B cell (primary cell): ENCODE measurements at regions of chr10 and their contacts with region 1.

Region 1: DNA sequence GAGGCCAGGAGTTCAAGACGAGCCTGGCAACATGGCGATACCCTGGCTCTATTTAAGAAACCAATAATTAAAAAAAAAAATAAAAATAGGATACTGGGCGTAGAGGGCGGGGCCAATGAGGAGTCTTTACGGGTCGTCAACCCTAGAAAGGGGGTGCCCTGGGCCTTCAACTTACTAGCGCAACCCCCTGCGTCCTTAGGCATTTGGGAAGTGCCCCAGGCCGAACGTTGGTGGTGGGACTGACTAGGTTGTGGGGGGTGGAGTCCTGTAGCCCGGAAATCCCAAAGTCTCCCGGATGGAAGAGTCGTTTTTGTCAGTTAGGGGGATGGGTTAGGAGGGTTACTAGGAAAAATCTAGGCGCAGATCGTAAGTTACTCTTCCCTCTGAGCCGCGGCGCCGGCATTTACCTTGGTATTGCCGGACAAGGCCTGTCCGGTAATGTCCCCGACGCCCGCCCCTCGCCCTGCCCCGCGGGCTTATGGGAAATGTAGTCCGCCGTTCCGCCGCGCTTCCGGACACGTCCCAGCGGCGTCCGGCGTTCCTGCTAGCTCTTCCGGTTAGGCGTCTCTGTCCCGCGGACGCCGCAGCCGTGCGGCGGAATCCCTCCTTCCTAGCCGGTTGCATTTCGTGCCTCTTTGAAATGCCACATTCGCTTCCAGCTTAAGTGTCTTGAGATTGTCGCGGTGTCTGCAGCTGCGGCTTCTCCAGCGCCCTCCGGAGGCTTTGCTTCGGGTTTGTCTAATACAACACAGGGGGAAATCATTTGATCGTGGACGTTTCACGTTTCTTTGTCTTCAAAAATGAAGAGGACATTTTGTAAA is 1.3 kb upstream of the ACBD5 start:
- DNase-seq: peak; percentile 96
- ATAC-seq: peak; percentile 65
- H3K4me3 ChIP-seq: peak overlapping the region; percentile 78 to 97 (median 91)
- H3K4me3 Mint-ChIP-seq: peak overlapping the region; percentile 95
- H3K27ac ChIP-seq: peak overlapping the region; percentile 93 to 97
- H3K27ac Mint-ChIP-seq: peak overlapping the region; percentile 100
- H3K4me1 ChIP-seq: peaks cover 17 to 27% of the 10 kb centered on the region in 2 donors
- H3K4me1 Mint-ChIP-seq: peaks cover 42% of the 10 kb centered on the region
- H3K27me3 ChIP-seq: no peaks in the 10 kb centered on the region
- H3K27me3 Mint-ChIP-seq: no peaks in the 10 kb centered on the region
- CTCF ChIP-seq: no peak

Region 2: DNA sequence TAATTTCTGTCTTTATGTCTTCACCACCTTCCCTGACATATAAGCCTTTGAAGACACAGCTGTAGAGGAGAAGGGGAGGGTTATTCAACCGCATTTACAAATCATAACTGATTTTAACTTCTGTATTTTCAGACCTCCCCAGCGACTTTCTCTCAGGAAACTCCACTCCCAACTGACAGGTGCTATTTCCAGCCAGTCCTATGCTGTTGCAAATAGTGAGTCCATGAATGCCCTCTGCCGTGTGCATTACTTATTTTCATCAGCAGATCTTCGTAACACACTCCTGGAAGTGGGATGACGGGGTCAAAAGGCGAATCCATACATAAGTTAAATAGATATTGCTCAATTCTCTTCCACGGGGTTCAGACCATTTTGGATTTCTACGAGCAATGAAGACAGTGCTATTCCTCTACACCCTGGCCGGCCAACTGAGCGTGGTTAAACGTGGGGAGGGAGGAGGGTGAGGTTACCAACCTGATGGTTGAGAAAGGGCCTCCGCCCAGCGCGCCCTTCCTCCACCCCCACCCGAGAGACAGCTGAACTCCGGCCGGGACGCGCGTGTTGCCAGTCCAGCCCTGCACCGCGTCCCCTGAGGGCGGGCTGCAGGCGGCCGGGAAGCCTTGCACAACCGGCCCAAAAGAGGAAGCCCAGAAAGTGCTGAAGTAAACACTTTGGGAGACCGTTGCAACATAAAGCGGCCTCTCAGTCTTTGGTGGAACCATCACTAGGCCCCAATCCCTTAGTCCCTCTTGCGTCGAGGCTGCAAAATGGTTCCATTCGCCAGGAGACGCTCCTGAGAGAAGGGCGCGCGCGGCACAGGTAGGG is 804.0 kb before region 1 on chr10 and contains the start of gene APBB1IP:
- CTCF ChIA-PET with region 1: no interaction called
- POLR2A ChIA-PET with region 1: no interaction called
- intact Hi-C with region 1: loop called (anchors 5 kb)
- DNase-seq: peak; percentile 81
- ATAC-seq: peak; percentile 82
- H3K4me3 ChIP-seq: peak within 1 kb of the TSS; percentile 73 to 89 (median 86)
- H3K4me3 Mint-ChIP-seq: peak within 1 kb of the TSS; percentile 95
- H3K27ac ChIP-seq: peak within 1 kb of the TSS; percentile 82 to 83
- H3K27ac Mint-ChIP-seq: peak within 1 kb of the TSS; percentile 99
- H3K4me1 ChIP-seq: peaks cover 31 to 44% of the 10 kb centered on the region in 2 donors
- H3K4me1 Mint-ChIP-seq: peaks cover 49% of the 10 kb centered on the region
- H3K27me3 ChIP-seq: no peaks in the 10 kb centered on the region
- H3K27me3 Mint-ChIP-seq: no peaks in the 10 kb centered on the region
- CTCF ChIP-seq: no peak
- total RNA-seq, gene APBB1IP: 97.0 and 99.8 TPM in 2 replicates

Region 3: GRCh38 chr10:26737730-26738129 is 504.1 kb before region 1 on chr10:
- CTCF ChIA-PET with region 1: no interaction called
- POLR2A ChIA-PET with region 1: no interaction called
- intact Hi-C with region 1: loop called (anchors 5 kb)
- DNase-seq: peak; percentile 86
- ATAC-seq: peak; percentile 69
- H3K4me3 ChIP-seq: no peak overlapping the region
- H3K4me3 Mint-ChIP-seq: peak overlapping the region; percentile 52
- H3K27ac ChIP-seq: peak overlapping the region; percentile 87
- H3K27ac Mint-ChIP-seq: peak overlapping the region; percentile 89
- H3K4me1 ChIP-seq: peaks cover 36 to 49% of the 10 kb centered on the region in 2 donors
- H3K4me1 Mint-ChIP-seq: peaks cover 50% of the 10 kb centered on the region
- H3K27me3 ChIP-seq: no peaks in the 10 kb centered on the region
- H3K27me3 Mint-ChIP-seq: no peaks in the 10 kb centered on the region
- CTCF ChIP-seq: no peak

Region 4: DNA sequence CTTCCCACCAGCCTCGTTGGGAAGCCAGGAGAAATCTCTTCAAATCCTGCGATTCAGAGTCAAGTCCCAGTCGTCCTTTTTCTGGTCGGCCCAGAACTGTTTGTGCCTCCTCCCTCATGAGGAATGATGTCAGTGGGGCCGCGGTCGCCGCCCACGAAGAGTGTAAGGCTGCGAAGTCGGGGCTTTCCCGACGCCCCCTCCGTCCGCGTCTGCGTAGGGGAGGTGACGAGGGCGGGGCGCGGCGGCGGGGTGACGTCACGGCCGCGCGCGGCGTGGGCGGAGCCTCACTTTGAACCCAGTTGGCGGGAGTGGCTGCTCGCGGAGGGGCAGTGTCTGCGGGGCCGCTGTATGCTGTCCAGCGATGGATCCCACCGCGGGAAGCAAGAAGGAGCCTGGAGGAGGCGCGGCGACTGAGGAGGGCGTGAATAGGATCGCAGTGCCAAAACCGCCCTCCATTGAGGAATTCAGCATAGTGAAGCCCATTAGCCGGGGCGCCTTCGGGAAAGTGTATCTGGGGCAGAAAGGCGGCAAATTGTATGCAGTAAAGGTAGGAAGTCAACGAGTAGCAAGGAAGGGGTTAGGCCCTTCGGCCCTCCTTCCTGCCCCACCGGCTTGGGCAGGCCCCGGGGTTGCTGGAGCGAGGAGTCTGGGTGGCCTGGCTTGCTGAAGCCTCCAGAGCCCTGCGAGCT is 86.7 kb before region 1 on chr10 and contains the start of gene MASTL:
- CTCF ChIA-PET with region 1: interaction called, 10 read pairs
- POLR2A ChIA-PET with region 1: interaction called, 30 read pairs
- intact Hi-C with region 1: loop called (anchors 1 kb)
- DNase-seq: peak; percentile 98
- ATAC-seq: peak; percentile 86
- H3K4me3 ChIP-seq: peak within 1 kb of the TSS; percentile 73 to 99 (median 95)
- H3K4me3 Mint-ChIP-seq: peak within 1 kb of the TSS; percentile 96
- H3K27ac ChIP-seq: peak within 1 kb of the TSS; percentile 97
- H3K27ac Mint-ChIP-seq: peak within 1 kb of the TSS; percentile 100
- H3K4me1 ChIP-seq: peaks cover 20 to 29% of the 10 kb centered on the region in 2 donors
- H3K4me1 Mint-ChIP-seq: peaks cover 48% of the 10 kb centered on the region
- H3K27me3 ChIP-seq: no peaks in the 10 kb centered on the region
- H3K27me3 Mint-ChIP-seq: no peaks in the 10 kb centered on the region
- CTCF ChIP-seq: no peak
- total RNA-seq, gene MASTL: 12.4 and 13.6 TPM in 2 replicates

Region 5: DNA sequence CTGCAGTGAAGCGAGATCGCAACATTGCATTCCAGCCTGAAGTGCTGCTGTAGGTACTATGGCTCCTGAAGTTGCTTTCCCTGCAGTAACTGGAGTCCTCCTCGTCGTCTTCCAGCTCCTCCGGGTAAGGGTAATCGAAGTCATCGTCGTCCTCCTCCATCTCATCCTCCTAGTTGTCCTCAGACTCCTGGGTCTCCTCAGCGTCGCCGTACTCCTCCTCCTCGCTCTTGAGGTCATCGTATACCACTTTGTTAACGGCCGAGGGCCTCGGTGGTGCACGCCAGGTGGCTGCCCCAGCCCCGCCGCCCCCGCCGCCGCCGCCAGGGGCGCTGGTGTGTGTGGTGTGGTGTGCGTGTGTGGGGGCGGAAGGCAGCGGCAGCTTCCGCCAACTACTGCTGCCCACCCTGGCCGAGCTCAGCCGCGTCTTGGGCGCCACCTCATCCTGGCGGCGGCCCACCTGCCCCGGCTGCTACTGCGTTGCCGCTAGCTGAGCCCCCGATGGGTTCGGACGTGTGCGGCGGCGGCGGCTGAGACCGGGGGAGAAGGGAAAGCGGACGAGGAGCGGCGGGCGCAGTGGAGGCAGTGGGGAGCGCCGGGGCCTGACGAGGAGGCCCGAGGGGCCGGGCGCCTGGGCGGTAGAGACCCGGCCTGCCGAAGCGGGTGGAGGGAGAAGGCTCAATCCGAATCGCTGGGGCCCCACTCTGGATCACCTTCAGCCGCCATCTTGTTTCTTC is 10.6 kb after region 1 on chr10:
- CTCF ChIA-PET with region 1: interaction called, 14 read pairs
- POLR2A ChIA-PET with region 1: interaction called, 27 read pairs
- intact Hi-C with region 1: loop called (anchors 1 kb)
- DNase-seq: peak; percentile 82
- ATAC-seq: peak; percentile 99
- H3K4me3 ChIP-seq: peak overlapping the region in 4 of 5 experiments; percentile 64 to 79 (median 71)
- H3K4me3 Mint-ChIP-seq: peak overlapping the region; percentile 85
- H3K27ac ChIP-seq: peak overlapping the region; percentile 78 to 91
- H3K27ac Mint-ChIP-seq: peak overlapping the region; percentile 92
- H3K4me1 ChIP-seq: peaks cover 1 to 9% of the 10 kb centered on the region in 2 donors
- H3K4me1 Mint-ChIP-seq: peaks cover 7% of the 10 kb centered on the region
- H3K27me3 ChIP-seq: peaks cover 0 to 6% (median 2%) of the 10 kb centered on the region in 4 experiments
- H3K27me3 Mint-ChIP-seq: peaks cover 6% of the 10 kb centered on the region
- CTCF ChIP-seq: peak; percentile 90

Region 6: GRCh38 chr10:27276581-27276980 is 34.7 kb after region 1 on chr10:
- CTCF ChIA-PET with region 1: no interaction called
- POLR2A ChIA-PET with region 1: no interaction called
- intact Hi-C with region 1: no loop called
- DNase-seq: no peak
- ATAC-seq: no peak
- H3K4me3 ChIP-seq: no peak overlapping the region
- H3K4me3 Mint-ChIP-seq: no peak overlapping the region
- H3K27ac ChIP-seq: no peak overlapping the region
- H3K27ac Mint-ChIP-seq: no peak overlapping the region
- H3K4me1 ChIP-seq: no peaks in the 10 kb centered on the region
- H3K4me1 Mint-ChIP-seq: no peaks in the 10 kb centered on the region
- H3K27me3 ChIP-seq: peaks cover 0 to 13% (median 3%) of the 10 kb centered on the region in 4 experiments
- H3K27me3 Mint-ChIP-seq: peaks cover 45% of the 10 kb centered on the region
- CTCF ChIP-seq: no peak

Region 7: GRCh38 chr10:27360581-27361172 is 118.8 kb after region 1 on chr10:
- CTCF ChIA-PET with region 1: interaction called, 5 read pairs
- POLR2A ChIA-PET with region 1: no interaction called
- intact Hi-C with region 1: loop called (anchors 5 kb)
- DNase-seq: peak; percentile 86
- ATAC-seq: peak; percentile 92
- H3K4me3 ChIP-seq: no peak overlapping the region
- H3K4me3 Mint-ChIP-seq: no peak overlapping the region
- H3K27ac ChIP-seq: no peak overlapping the region
- H3K27ac Mint-ChIP-seq: no peak overlapping the region
- H3K4me1 ChIP-seq: peaks cover 7 to 9% of the 10 kb centered on the region in 2 donors
- H3K4me1 Mint-ChIP-seq: peaks cover 10% of the 10 kb centered on the region
- H3K27me3 ChIP-seq: no peaks in the 10 kb centered on the region
- H3K27me3 Mint-ChIP-seq: no peaks in the 10 kb centered on the region
- CTCF ChIP-seq: peak; percentile 99

Region 8: GRCh38 chr10:28302638-28303488 is 1061.0 kb after region 1 on chr10 and contains the start of gene MPP7:
- CTCF ChIA-PET with region 1: no interaction called
- POLR2A ChIA-PET with region 1: no interaction called
- intact Hi-C with region 1: loop called (anchors 5 kb)
- DNase-seq: peak; percentile 97
- ATAC-seq: peak; percentile 87
- H3K4me3 ChIP-seq: peak within 1 kb of the TSS; percentile 55 to 96 (median 76)
- H3K4me3 Mint-ChIP-seq: peak within 1 kb of the TSS; percentile 94
- H3K27ac ChIP-seq: peak within 1 kb of the TSS; percentile 66 to 73
- H3K27ac Mint-ChIP-seq: peak within 1 kb of the TSS; percentile 80
- H3K4me1 ChIP-seq: peaks cover 17 to 19% of the 10 kb centered on the region in 2 donors
- H3K4me1 Mint-ChIP-seq: peaks cover 24% of the 10 kb centered on the region
- H3K27me3 ChIP-seq: peaks cover 0 to 29% (median 20%) of the 10 kb centered on the region in 4 experiments
- H3K27me3 Mint-ChIP-seq: peaks cover 33% of the 10 kb centered on the region
- CTCF ChIP-seq: peak; percentile 59
- total RNA-seq, gene MPP7: 13.1 and 13.6 TPM in 2 replicates